Posterior vena cava (tissue), 2 donors: ENCODE measurements at regions of chr4 and their contacts with region 1.

Region 1: GRCh38 chr4:175633310-175633709 is 178.8 kb downstream of the GPM6A start:
- DNase-seq: no peak

Region 2: DNA sequence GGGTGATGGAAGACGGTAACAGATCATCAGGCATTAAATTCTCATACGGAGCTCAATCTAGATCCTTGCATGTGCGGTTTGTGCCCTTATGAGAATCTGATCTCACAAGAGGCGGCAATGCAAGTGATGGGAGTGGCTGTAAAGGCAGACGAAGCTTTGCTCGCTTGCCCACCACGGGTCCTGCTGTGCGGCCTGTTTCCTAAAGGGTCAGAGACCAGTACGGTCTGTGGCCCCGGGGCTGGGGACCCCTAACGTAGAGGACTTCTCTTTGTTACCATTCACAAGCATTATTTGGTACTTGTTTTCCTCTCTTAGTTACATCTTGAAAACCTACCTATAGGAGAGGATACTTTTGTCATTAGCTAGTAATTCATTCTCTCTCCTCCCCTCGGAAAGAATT is 494.1 kb before region 1 on chr4:
- intact Hi-C with region 1: no loop called
- DNase-seq: no peak

Region 3: DNA sequence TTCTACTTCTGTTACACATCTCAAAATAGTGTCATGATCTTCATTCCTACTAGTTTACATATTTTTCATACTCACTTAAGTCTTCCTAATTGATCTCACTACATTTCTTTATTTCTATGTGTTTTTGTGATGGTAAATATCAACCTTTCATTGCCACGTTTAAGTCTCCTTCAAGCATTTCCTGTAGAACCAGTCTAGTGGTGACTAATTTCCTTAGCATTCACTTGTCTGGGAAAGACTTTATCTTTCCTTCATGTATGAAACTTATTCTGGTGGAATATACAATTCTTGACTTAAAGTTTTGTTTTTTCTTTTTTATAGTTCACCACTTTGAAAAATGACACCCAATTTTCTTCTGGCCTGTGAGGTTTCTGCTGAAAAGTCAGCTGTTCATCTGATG is 1495.0 kb after region 1 on chr4:
- intact Hi-C with region 1: loop called in 1 of 2 experiments (anchors 5 kb)
- DNase-seq: no peak